Ascending aorta (tissue), 2 donors: ENCODE measurements at regions of chr16 and their contacts with region 1.

Region 1: GRCh38 chr16:56931892-56932720 is at the start of gene HERPUD1:
- DNase-seq: peak; percentile 92 to 99
- H3K4me3 ChIP-seq: peak within 1 kb of the TSS; percentile 99 to 100
- H3K27ac ChIP-seq: peak within 1 kb of the TSS; percentile 99 to 100
- H3K4me1 ChIP-seq: peaks cover 12 to 17% of the 10 kb centered on the region in 2 donors
- H3K27me3 ChIP-seq: no peaks in the 10 kb centered on the region
- CTCF ChIP-seq: peak in 2 of 3 experiments; percentile 5 to 14
- total RNA-seq, gene HERPUD1: 108 TPM

Region 2: GRCh38 chr16:56425439-56425832 is 506.7 kb before region 1 on chr16 and contains the start of gene AMFR:
- intact Hi-C with region 1: loop called (anchors 10 kb)
- DNase-seq: peak in 1 of 2 donors; percentile 78
- H3K4me3 ChIP-seq: peak within 1 kb of the TSS; percentile 95 to 99
- H3K27ac ChIP-seq: peak within 1 kb of the TSS; percentile 84 to 97
- H3K4me1 ChIP-seq: peaks cover 0 to 21% of the 10 kb centered on the region in 2 donors
- H3K27me3 ChIP-seq: no peaks in the 10 kb centered on the region
- CTCF ChIP-seq: peak in 1 of 3 experiments; percentile 89
- total RNA-seq, gene AMFR: 112 TPM

Region 3: GRCh38 chr16:56824331-56824730 is 107.8 kb before region 1 on chr16:
- intact Hi-C with region 1: no loop called
- DNase-seq: no peak
- H3K4me3 ChIP-seq: no peak overlapping the region
- H3K27ac ChIP-seq: no peak overlapping the region
- H3K4me1 ChIP-seq: no peaks in the 10 kb centered on the region
- H3K27me3 ChIP-seq: no peaks in the 10 kb centered on the region
- CTCF ChIP-seq: no peak

Region 4: DNA sequence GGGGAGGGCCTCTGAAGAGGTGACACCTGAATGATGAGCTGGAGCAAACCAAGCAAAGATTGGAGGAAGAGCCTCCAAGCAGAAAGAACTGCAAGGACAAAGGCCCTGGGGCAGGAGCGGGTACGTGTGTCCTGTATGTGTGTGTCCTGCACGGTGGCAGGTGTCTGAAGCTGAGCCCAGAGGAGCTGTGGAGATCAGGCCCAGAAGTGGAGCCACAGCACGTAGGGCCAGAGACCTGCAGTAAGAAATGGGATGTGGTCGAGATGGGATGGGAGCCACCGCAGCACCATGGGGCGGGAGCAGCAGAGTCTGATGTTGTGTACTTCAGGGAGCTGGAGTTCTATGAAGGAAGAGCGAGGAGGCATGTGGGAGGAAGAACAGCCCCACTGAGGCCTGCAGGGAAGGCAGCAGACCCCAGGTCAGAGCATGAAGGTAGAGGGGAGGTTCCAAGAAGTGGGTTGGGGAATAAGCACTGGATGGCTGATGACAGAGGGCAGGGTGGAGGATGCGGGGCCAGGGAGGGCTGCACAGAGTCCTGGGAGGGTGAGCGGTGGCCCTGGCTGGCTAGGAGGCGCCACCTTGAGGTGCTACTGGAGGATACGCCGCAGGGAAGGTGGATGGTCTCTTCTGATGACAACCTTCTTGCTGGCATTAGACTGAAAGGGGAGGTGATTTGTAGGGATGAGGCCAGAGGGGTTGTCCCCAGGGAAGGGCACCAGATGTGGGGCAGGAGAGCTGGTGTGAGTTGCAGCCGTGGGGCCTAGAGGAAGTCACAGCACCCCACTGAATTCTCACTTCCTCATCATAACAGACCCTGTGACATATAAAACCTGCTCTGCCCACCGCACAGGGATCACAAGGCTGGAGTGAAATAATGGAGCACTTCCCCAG is 19.0 kb after region 1 on chr16:
- intact Hi-C with region 1: loop called (anchors 1 kb)
- DNase-seq: no peak
- H3K4me3 ChIP-seq: no peak overlapping the region
- H3K27ac ChIP-seq: no peak overlapping the region
- H3K4me1 ChIP-seq: peaks cover 0 to 1% of the 10 kb centered on the region in 2 donors
- H3K27me3 ChIP-seq: no peaks in the 10 kb centered on the region
- CTCF ChIP-seq: peak; percentile 24 to 47 (median 29)

Region 5: GRCh38 chr16:57167953-57168352 is 235.8 kb after region 1 on chr16:
- intact Hi-C with region 1: no loop called
- DNase-seq: no peak
- H3K4me3 ChIP-seq: no peak overlapping the region
- H3K27ac ChIP-seq: no peak overlapping the region
- H3K4me1 ChIP-seq: no peaks in the 10 kb centered on the region
- H3K27me3 ChIP-seq: no peaks in the 10 kb centered on the region
- CTCF ChIP-seq: peak; percentile 22 to 63 (median 62)

Region 6: GRCh38 chr16:57185944-57186871 is 254.1 kb after region 1 on chr16 and contains the starts of genes PSME3IP1 and RSPRY1:
- intact Hi-C with region 1: loop called (anchors 5 kb)
- DNase-seq: peak; percentile 98 to 99
- H3K4me3 ChIP-seq: peak within 1 kb of the TSS; percentile 78 to 94
- H3K27ac ChIP-seq: peak within 1 kb of the TSS; percentile 95 to 96
- H3K4me1 ChIP-seq: peaks cover 5 to 33% of the 10 kb centered on the region in 2 donors
- H3K27me3 ChIP-seq: no peaks in the 10 kb centered on the region
- CTCF ChIP-seq: no peak
- total RNA-seq, gene PSME3IP1: 32.6 TPM
- total RNA-seq, gene RSPRY1: 29.3 TPM

Region 7: GRCh38 chr16:58629572-58630104 is 1697.5 kb after region 1 on chr16 and contains the start of gene CNOT1:
- intact Hi-C with region 1: loop called (anchors 10 kb)
- DNase-seq: peak; percentile 98 to 100
- H3K4me3 ChIP-seq: peak within 1 kb of the TSS; percentile 78 to 86
- H3K27ac ChIP-seq: peak within 1 kb of the TSS; percentile 98
- H3K4me1 ChIP-seq: peaks cover 0 to 6% of the 10 kb centered on the region in 2 donors
- H3K27me3 ChIP-seq: no peaks in the 10 kb centered on the region
- CTCF ChIP-seq: no peak
- total RNA-seq, gene CNOT1: 324 TPM